CD8-positive, alpha-beta T cell (primary cell): ENCODE measurements at regions of chr7 and their contacts with region 1.

Region 1: DNA sequence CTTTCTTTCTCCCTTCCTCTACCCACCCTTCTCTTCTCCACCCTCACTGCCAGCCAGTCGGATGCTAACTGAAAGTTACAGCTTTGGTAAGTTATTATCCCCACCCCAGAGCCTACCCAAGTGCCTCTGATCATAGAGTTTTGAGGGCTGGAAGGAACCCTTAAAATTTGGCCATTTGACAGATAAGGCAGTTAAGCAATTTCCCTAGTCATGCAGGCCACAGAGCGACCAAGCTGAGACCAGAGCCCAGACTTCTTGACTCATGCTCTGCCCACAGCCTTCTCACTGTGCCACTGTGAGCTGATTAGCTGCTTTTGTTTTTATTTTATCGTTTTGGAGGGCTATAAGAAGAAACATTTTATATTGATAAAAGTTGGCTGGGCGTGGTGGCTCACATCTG is 17.2 kb downstream of the SAP25 start:
- DNase-seq: no peak
- ATAC-seq: no peak
- H3K4me3 ChIP-seq: no peak overlapping the region
- H3K4me3 Mint-ChIP-seq: no peak overlapping the region
- H3K27ac ChIP-seq: no peak overlapping the region
- H3K27ac Mint-ChIP-seq: no peak overlapping the region
- H3K4me1 ChIP-seq: peaks cover 5% of the 10 kb centered on the region
- H3K4me1 Mint-ChIP-seq: peaks cover 13% of the 10 kb centered on the region
- H3K27me3 ChIP-seq: no peaks in the 10 kb centered on the region
- H3K27me3 Mint-ChIP-seq: no peaks in the 10 kb centered on the region
- CTCF ChIP-seq: no peak

Region 2: DNA sequence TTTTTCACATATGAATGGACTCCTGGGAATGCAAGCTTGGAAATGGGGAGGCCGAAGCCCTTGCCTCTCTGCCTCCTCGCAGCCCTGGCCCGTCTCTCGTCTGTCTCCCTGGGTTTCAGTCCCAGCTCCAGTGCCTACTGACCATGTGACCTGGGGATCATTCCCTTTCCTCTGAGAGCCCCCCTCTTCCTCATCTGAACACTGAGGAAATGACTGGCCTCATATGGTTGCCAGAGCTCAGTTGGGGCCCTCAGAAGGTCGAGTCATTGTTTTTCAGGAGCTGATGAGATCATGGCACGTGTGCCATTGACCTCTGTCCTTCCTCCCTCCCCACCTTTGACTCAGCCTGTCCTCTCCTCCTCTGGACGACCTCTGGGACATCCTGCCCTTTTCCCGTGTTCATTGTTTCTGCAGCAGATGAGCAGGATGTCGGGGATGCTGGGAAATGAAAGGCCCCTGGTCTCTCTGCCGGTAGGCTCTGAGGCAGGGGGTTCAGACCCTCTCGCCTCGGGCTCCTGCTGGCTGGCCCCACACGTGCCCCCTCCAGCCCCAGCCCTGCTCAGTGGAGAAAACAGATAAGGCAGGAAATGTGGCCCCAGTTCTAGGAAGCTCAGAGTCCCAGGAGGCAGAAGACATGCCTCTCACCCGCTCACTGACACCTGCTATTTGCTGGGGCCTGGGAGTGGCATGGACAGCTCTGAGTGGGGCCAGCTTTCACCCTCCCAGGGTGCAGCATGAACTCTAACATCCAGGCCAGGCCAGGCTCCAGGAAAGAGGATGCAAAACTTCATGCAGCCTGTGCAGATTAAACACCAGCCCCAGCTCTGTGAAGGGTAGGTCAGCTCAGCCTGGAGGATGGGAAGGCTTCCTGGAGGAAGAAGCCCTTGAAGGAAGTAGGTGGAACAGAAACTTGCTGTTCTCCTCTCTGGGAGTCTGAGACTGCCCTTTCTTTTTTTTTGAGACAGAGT is 111.9 kb before region 1 on chr7:
- CTCF ChIA-PET with region 1: interaction called, 10 read pairs
- POLR2A ChIA-PET with region 1: interaction called, 3 read pairs
- intact Hi-C with region 1: no loop called
- DNase-seq: peak in 1 of 9 experiments; percentile 15
- ATAC-seq: no peak
- H3K4me3 ChIP-seq: no peak overlapping the region
- H3K4me3 Mint-ChIP-seq: no peak overlapping the region
- H3K27ac ChIP-seq: no peak overlapping the region
- H3K27ac Mint-ChIP-seq: no peak overlapping the region
- H3K4me1 ChIP-seq: peaks cover 10% of the 10 kb centered on the region
- H3K4me1 Mint-ChIP-seq: peaks cover 10% of the 10 kb centered on the region
- H3K27me3 ChIP-seq: no peaks in the 10 kb centered on the region
- H3K27me3 Mint-ChIP-seq: no peaks in the 10 kb centered on the region
- CTCF ChIP-seq: no peak

Region 3: GRCh38 chr7:100478966-100479665 is 77.4 kb before region 1 on chr7 and contains the start of gene TSC22D4:
- CTCF ChIA-PET with region 1: interaction called, 203 read pairs
- POLR2A ChIA-PET with region 1: no interaction called
- intact Hi-C with region 1: loop called (anchors 1 to 2 kb)
- DNase-seq: peak; percentile 85 to 97 (median 94)
- ATAC-seq: peak; percentile 69
- H3K4me3 ChIP-seq: peak within 1 kb of the TSS; percentile 82 to 96
- H3K4me3 Mint-ChIP-seq: peak within 1 kb of the TSS; percentile 93
- H3K27ac ChIP-seq: peak within 1 kb of the TSS; percentile 72 to 75
- H3K27ac Mint-ChIP-seq: peak within 1 kb of the TSS; percentile 89
- H3K4me1 ChIP-seq: peaks cover 54% of the 10 kb centered on the region
- H3K4me1 Mint-ChIP-seq: peaks cover 44% of the 10 kb centered on the region
- H3K27me3 ChIP-seq: no peaks in the 10 kb centered on the region
- H3K27me3 Mint-ChIP-seq: no peaks in the 10 kb centered on the region
- CTCF ChIP-seq: no peak
- total RNA-seq, gene TSC22D4: 30.7 to 32.3 TPM

Region 4: DNA sequence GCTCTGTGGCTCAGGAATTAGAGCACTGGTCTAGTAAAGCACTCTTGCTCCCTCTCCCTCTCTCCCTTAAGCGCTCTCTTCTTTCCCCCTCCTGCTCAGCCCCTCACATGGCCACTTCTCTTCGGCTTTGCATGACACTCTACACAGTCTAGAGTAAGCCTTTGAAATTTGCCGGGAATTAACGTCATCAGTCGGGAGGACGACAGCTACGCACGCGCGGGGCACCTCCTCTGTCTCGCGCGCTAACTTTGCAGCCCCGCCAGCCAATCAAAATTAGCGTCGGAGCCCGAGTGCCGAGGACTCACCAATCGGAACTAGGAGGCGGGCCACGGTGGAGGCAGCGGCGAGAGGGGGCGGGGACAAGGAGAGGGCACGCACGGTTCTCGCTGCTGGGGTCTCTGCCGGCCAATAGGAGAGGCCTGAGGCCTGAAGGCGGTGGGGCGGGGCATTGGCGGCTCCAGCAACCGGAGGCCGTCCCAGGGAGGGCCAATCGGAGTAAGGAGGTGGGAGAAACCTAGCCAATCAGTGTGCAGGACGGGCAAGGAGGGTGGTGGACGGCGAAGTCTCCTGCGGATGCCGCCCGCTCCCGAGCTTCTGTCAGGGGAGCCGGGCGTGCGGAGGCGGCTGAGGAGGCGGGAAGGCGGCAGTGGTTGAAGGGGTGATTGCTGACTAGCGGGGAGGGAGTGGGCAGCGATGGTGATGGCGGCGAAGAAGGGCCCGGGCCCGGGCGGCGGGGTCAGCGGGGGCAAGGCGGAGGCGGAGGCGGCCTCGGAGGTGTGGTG is 17.7 kb before region 1 on chr7 and contains the start of gene AGFG2:
- CTCF ChIA-PET with region 1: interaction called, 86 read pairs
- POLR2A ChIA-PET with region 1: interaction called, 9 read pairs
- intact Hi-C with region 1: loop called (anchors 1 kb)
- DNase-seq: peak; percentile 100
- ATAC-seq: peak; percentile 94
- H3K4me3 ChIP-seq: peak within 1 kb of the TSS; percentile 67 to 74
- H3K4me3 Mint-ChIP-seq: peak within 1 kb of the TSS; percentile 99
- H3K27ac ChIP-seq: peak within 1 kb of the TSS; percentile 48 to 61
- H3K27ac Mint-ChIP-seq: peak within 1 kb of the TSS; percentile 84
- H3K4me1 ChIP-seq: peaks cover 40% of the 10 kb centered on the region
- H3K4me1 Mint-ChIP-seq: peaks cover 49% of the 10 kb centered on the region
- H3K27me3 ChIP-seq: no peaks in the 10 kb centered on the region
- H3K27me3 Mint-ChIP-seq: no peaks in the 10 kb centered on the region
- CTCF ChIP-seq: no peak
- total RNA-seq, gene AGFG2: 4.4 to 6.3 TPM

Region 5: GRCh38 chr7:100577103-100577906 is 20.8 kb after region 1 on chr7:
- CTCF ChIA-PET with region 1: interaction called, 210 read pairs
- POLR2A ChIA-PET with region 1: no interaction called
- intact Hi-C with region 1: no loop called
- DNase-seq: no peak
- ATAC-seq: no peak
- H3K4me3 ChIP-seq: no peak overlapping the region
- H3K4me3 Mint-ChIP-seq: no peak overlapping the region
- H3K27ac ChIP-seq: no peak overlapping the region
- H3K27ac Mint-ChIP-seq: no peak overlapping the region
- H3K4me1 ChIP-seq: peaks cover 29% of the 10 kb centered on the region
- H3K4me1 Mint-ChIP-seq: peaks cover 4% of the 10 kb centered on the region
- H3K27me3 ChIP-seq: no peaks in the 10 kb centered on the region
- H3K27me3 Mint-ChIP-seq: no peaks in the 10 kb centered on the region
- CTCF ChIP-seq: no peak

Region 6: GRCh38 chr7:100852048-100852872 is 295.7 kb after region 1 on chr7 and contains the start of gene SLC12A9:
- CTCF ChIA-PET with region 1: no interaction called
- POLR2A ChIA-PET with region 1: no interaction called
- intact Hi-C with region 1: loop called in 1 of 2 experiments (anchors 5 kb)
- DNase-seq: peak; percentile 67 to 93 (median 85)
- ATAC-seq: peak; percentile 92
- H3K4me3 ChIP-seq: peak within 1 kb of the TSS; percentile 84 to 98
- H3K4me3 Mint-ChIP-seq: peak within 1 kb of the TSS; percentile 88
- H3K27ac ChIP-seq: peak within 1 kb of the TSS; percentile 42 to 64
- H3K27ac Mint-ChIP-seq: peak within 1 kb of the TSS; percentile 90
- H3K4me1 ChIP-seq: peaks cover 18% of the 10 kb centered on the region
- H3K4me1 Mint-ChIP-seq: peaks cover 20% of the 10 kb centered on the region
- H3K27me3 ChIP-seq: no peaks in the 10 kb centered on the region
- H3K27me3 Mint-ChIP-seq: no peaks in the 10 kb centered on the region
- CTCF ChIP-seq: peak; percentile 85
- total RNA-seq, gene SLC12A9: 23.4 to 26.6 TPM

Region 7: DNA sequence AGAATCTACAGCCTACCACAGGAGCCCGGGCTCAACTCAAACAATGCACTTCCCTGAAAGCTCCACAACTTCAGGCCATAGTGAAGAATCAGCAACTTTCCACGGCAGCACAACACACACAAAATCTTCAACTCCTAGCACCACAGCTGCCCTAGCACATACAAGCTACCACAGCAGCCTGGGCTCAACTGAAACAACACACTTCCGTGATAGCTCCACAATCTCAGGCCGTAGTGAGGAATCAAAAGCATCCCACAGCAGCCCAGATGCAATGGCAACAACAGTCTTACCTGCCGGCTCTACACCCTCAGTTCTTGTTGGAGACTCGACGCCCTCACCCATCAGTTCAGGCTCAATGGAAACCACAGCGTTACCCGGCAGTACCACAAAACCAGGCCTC is 435.1 kb after region 1 on chr7:
- CTCF ChIA-PET with region 1: no interaction called
- POLR2A ChIA-PET with region 1: no interaction called
- intact Hi-C with region 1: no loop called
- DNase-seq: no peak
- ATAC-seq: no peak
- H3K4me3 ChIP-seq: no peak overlapping the region
- H3K4me3 Mint-ChIP-seq: no peak overlapping the region
- H3K27ac ChIP-seq: no peak overlapping the region
- H3K27ac Mint-ChIP-seq: no peak overlapping the region
- H3K4me1 ChIP-seq: no peaks in the 10 kb centered on the region
- H3K4me1 Mint-ChIP-seq: no peaks in the 10 kb centered on the region
- H3K27me3 ChIP-seq: no peaks in the 10 kb centered on the region
- H3K27me3 Mint-ChIP-seq: no peaks in the 10 kb centered on the region
- CTCF ChIP-seq: no peak